Calu3 (cell line): ENCODE measurements at regions of chr3 and their contacts with region 1.

Region 1: GRCh38 chr3:125337506-125337905 is 37.6 kb downstream of the ZNF148 start:
- DNase-seq: no peak
- H3K4me3 Mint-ChIP-seq: no peak overlapping the region
- H3K27ac Mint-ChIP-seq: no peak overlapping the region
- H3K4me1 Mint-ChIP-seq: peaks cover 22% of the 10 kb centered on the region
- H3K27me3 Mint-ChIP-seq: no peaks in the 10 kb centered on the region
- CTCF ChIP-seq: no peak

Region 2: DNA sequence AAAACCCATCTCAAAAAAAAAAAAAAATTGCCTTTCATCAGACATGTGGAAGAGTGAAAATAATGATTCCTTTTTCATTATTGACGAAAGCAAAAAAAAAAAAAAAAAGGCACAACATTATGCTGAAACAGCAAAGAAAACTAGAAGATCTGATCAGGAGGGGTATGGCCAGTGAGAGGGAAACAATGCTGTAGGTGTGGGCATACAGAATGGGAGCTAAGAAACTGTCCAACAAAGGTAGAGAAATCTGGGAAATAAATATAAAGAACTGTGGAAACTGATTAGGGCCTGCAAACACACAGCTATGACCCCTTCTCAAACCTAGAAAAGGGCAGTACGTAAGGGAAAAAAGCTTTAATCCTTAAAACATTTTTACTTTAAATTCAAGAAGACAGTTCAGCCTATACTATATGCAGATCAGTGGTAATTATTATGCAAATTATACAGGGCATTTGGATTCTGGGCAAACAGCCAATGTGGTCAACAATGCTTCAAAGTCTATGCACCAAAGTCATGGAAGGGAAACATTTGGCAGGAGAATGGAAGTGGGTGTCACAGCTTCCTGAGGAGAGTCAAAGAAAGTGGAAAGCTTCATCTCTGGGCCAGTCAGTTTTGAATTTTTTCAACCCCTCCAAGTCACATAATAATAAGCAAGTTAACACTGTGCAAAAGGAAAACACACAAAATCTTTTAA is 56.7 kb before region 1 on chr3:
- CTCF ChIA-PET with region 1: interaction called, 11 read pairs
- intact Hi-C with region 1: no loop called
- DNase-seq: peak; percentile 6
- H3K4me3 Mint-ChIP-seq: no peak overlapping the region
- H3K27ac Mint-ChIP-seq: no peak overlapping the region
- H3K4me1 Mint-ChIP-seq: no peaks in the 10 kb centered on the region
- H3K27me3 Mint-ChIP-seq: no peaks in the 10 kb centered on the region
- CTCF ChIP-seq: no peak

Region 3: GRCh38 chr3:125357032-125357658 is 19.6 kb after region 1 on chr3:
- CTCF ChIA-PET with region 1: no interaction called
- intact Hi-C with region 1: no loop called
- DNase-seq: peak; percentile 43
- H3K4me3 Mint-ChIP-seq: peak overlapping the region; percentile 83
- H3K27ac Mint-ChIP-seq: peak overlapping the region; percentile 55
- H3K4me1 Mint-ChIP-seq: peaks cover 66% of the 10 kb centered on the region
- H3K27me3 Mint-ChIP-seq: no peaks in the 10 kb centered on the region
- CTCF ChIP-seq: no peak